CD8-positive, alpha-beta T cell (primary cell): ENCODE measurements at regions of chr9 and their contacts with region 1.

Region 1: DNA sequence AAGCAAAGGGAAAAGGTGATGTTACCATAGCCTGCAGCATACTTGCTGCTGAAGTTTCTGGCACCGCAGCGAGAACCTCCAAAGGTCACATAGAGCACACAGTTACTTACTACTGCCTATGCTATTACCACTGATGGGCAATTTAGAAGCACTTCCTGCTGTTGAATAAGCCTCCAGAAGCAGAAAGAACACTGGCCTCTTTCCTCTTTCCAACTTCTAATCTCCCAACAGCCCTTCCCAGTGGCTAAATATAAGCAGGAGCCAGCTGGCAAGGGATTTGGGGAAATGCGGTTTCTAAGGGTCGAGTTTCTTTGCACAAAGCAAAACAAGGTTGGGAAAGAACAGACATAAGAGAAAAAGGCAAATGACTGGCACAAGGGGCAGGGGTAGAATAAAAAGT is 669.2 kb upstream of the ACO1 start:
- DNase-seq: no peak
- ATAC-seq: no peak
- H3K4me3 ChIP-seq: no peak overlapping the region
- H3K4me3 Mint-ChIP-seq: no peak overlapping the region
- H3K27ac ChIP-seq: no peak overlapping the region
- H3K27ac Mint-ChIP-seq: no peak overlapping the region
- H3K4me1 ChIP-seq: no peaks in the 10 kb centered on the region
- H3K4me1 Mint-ChIP-seq: no peaks in the 10 kb centered on the region
- H3K27me3 ChIP-seq: no peaks in the 10 kb centered on the region
- H3K27me3 Mint-ChIP-seq: no peaks in the 10 kb centered on the region
- CTCF ChIP-seq: no peak

Region 2: GRCh38 chr9:31669311-31669710 is 45.9 kb before region 1 on chr9:
- CTCF ChIA-PET with region 1: no interaction called
- POLR2A ChIA-PET with region 1: no interaction called
- intact Hi-C with region 1: loop called in 1 of 2 experiments (anchors 10 kb)
- DNase-seq: no peak
- ATAC-seq: no peak
- H3K4me3 ChIP-seq: no peak overlapping the region
- H3K4me3 Mint-ChIP-seq: no peak overlapping the region
- H3K27ac ChIP-seq: no peak overlapping the region
- H3K27ac Mint-ChIP-seq: no peak overlapping the region
- H3K4me1 ChIP-seq: no peaks in the 10 kb centered on the region
- H3K4me1 Mint-ChIP-seq: no peaks in the 10 kb centered on the region
- H3K27me3 ChIP-seq: no peaks in the 10 kb centered on the region
- H3K27me3 Mint-ChIP-seq: no peaks in the 10 kb centered on the region
- CTCF ChIP-seq: no peak

Region 3: GRCh38 chr9:31683116-31683515 is 32.1 kb before region 1 on chr9:
- CTCF ChIA-PET with region 1: no interaction called
- POLR2A ChIA-PET with region 1: no interaction called
- intact Hi-C with region 1: no loop called
- DNase-seq: no peak
- ATAC-seq: no peak
- H3K4me3 ChIP-seq: no peak overlapping the region
- H3K4me3 Mint-ChIP-seq: no peak overlapping the region
- H3K27ac ChIP-seq: no peak overlapping the region
- H3K27ac Mint-ChIP-seq: no peak overlapping the region
- H3K4me1 ChIP-seq: no peaks in the 10 kb centered on the region
- H3K4me1 Mint-ChIP-seq: no peaks in the 10 kb centered on the region
- H3K27me3 ChIP-seq: no peaks in the 10 kb centered on the region
- H3K27me3 Mint-ChIP-seq: no peaks in the 10 kb centered on the region
- CTCF ChIP-seq: no peak

Region 4: DNA sequence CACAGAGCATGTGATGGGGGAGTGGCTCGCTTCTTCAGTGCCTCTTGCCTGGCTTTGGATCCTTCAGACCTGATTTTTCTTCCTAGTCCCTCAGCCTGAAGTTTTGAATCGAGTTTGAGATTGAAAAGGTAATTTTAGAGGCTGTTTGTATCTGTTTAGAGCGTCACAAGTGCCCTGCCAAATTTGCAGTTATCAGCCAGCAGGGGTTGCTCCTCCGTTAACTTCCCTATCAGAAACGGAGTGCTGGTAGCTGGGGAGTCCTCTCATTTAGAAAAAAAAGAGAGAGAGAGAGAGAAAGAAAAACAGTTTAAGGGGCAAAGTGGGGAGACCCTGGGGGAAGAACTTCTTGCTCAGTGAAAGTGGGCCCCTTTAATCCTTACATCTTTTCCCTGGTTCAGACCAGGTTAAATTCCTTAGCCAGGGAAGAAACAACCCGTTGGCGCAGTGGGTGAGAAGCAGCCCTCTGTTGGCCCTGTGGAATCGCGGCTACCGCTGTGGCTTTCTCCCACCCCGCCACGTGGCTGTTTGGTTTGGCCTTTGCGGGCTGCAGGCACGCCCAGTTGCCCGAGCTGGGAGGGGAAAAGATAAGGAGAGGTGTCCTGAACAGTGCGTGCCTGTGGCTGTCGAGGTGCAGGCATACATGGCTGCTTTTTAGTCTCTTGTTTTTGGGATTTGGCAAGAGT is 92.5 kb after region 1 on chr9:
- CTCF ChIA-PET with region 1: no interaction called
- POLR2A ChIA-PET with region 1: no interaction called
- intact Hi-C with region 1: no loop called
- DNase-seq: no peak
- ATAC-seq: no peak
- H3K4me3 ChIP-seq: no peak overlapping the region
- H3K4me3 Mint-ChIP-seq: no peak overlapping the region
- H3K27ac ChIP-seq: no peak overlapping the region
- H3K27ac Mint-ChIP-seq: no peak overlapping the region
- H3K4me1 ChIP-seq: no peaks in the 10 kb centered on the region
- H3K4me1 Mint-ChIP-seq: no peaks in the 10 kb centered on the region
- H3K27me3 ChIP-seq: no peaks in the 10 kb centered on the region
- H3K27me3 Mint-ChIP-seq: peaks cover 16% of the 10 kb centered on the region
- CTCF ChIP-seq: no peak